IMR-90 (cell line): ENCODE measurements at regions of chr3 and their contacts with region 1.

Region 1: GRCh38 chr3:136404056-136404455 is 153.9 kb downstream of the PCCB start:
- DNase-seq: no peak
- ATAC-seq: no peak
- H3K4me3 ChIP-seq: no peak overlapping the region
- H3K27ac ChIP-seq: no peak overlapping the region
- H3K4me1 ChIP-seq: no peaks in the 10 kb centered on the region
- H3K27me3 ChIP-seq: no peaks in the 10 kb centered on the region
- CTCF ChIP-seq: no peak
- POLR2A ChIP-seq: no peak
- RAD21 ChIP-seq: no peak

Region 2: GRCh38 chr3:134496471-134497071 is 1907.5 kb before region 1 on chr3:
- CTCF ChIA-PET with region 1: no interaction called
- POLR2A ChIA-PET with region 1: no interaction called
- dilution Hi-C with region 1: no loop called
- in situ Hi-C with region 1: no loop called
- intact Hi-C with region 1: no loop called
- DNase-seq: no peak
- ATAC-seq: no peak
- H3K4me3 ChIP-seq: no peak overlapping the region
- H3K27ac ChIP-seq: no peak overlapping the region
- H3K4me1 ChIP-seq: peaks cover 4% of the 10 kb centered on the region; the same call in 1 of the 2 replicates
- H3K27me3 ChIP-seq: no peaks in the 10 kb centered on the region
- CTCF ChIP-seq: no peak
- POLR2A ChIP-seq: no peak
- RAD21 ChIP-seq: no peak

Region 3: GRCh38 chr3:136350132-136350531 is 53.9 kb before region 1 on chr3:
- CTCF ChIA-PET with region 1: no interaction called
- POLR2A ChIA-PET with region 1: no interaction called
- dilution Hi-C with region 1: no loop called
- in situ Hi-C with region 1: no loop called
- intact Hi-C with region 1: loop called (anchors 10 kb)
- DNase-seq: peak; percentile 98
- ATAC-seq: peak; percentile 76
- H3K4me3 ChIP-seq: peak overlapping the region; percentile 0; the same call in 1 of the 2 replicates
- H3K27ac ChIP-seq: peak overlapping the region; percentile 99
- H3K4me1 ChIP-seq: peaks cover 10% of the 10 kb centered on the region
- H3K27me3 ChIP-seq: no peaks in the 10 kb centered on the region
- CTCF ChIP-seq: no peak
- POLR2A ChIP-seq: no peak
- RAD21 ChIP-seq: no peak

Region 4: DNA sequence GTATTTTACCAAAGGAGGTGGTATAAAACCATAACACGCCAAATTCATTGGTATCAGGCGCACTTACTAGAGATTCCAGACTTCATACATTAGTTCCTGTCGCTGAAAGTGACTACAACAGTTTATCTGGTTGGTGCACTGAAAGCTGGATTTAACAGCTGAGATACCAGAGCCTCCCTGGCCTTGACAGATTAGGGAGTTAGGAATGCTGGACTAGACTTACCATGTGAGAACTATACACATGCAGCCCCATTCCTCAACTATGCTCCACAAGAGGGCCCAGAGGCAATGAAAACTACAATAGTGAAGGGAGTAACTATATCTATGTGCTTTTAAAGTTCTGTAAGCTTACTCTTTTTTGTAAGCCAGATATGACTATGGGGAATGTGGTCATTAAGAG is 173.7 kb after region 1 on chr3:
- CTCF ChIA-PET with region 1: no interaction called
- POLR2A ChIA-PET with region 1: no interaction called
- dilution Hi-C with region 1: no loop called
- in situ Hi-C with region 1: no loop called
- intact Hi-C with region 1: no loop called
- DNase-seq: no peak
- ATAC-seq: no peak
- H3K4me3 ChIP-seq: no peak overlapping the region
- H3K27ac ChIP-seq: no peak overlapping the region
- H3K4me1 ChIP-seq: no peaks in the 10 kb centered on the region; the same call in 1 of the 2 replicates
- H3K27me3 ChIP-seq: no peaks in the 10 kb centered on the region
- CTCF ChIP-seq: no peak
- POLR2A ChIP-seq: no peak
- RAD21 ChIP-seq: no peak

Region 5: GRCh38 chr3:136734382-136735070 is 330.5 kb after region 1 on chr3:
- CTCF ChIA-PET with region 1: no interaction called
- POLR2A ChIA-PET with region 1: no interaction called
- dilution Hi-C with region 1: no loop called
- in situ Hi-C with region 1: no loop called
- intact Hi-C with region 1: no loop called
- DNase-seq: no peak
- ATAC-seq: no peak
- H3K4me3 ChIP-seq: no peak overlapping the region
- H3K27ac ChIP-seq: no peak overlapping the region
- H3K4me1 ChIP-seq: peaks cover 2% of the 10 kb centered on the region; the same call in 1 of the 2 replicates
- H3K27me3 ChIP-seq: no peaks in the 10 kb centered on the region
- CTCF ChIP-seq: no peak
- POLR2A ChIP-seq: no peak
- RAD21 ChIP-seq: no peak